Activated CD4-positive, alpha-beta T cell treated with anti-CD3 and anti-CD28 coated beads for 36 hours (primary cell): ENCODE measurements at regions of chr16 and their contacts with region 1.

Region 1: DNA sequence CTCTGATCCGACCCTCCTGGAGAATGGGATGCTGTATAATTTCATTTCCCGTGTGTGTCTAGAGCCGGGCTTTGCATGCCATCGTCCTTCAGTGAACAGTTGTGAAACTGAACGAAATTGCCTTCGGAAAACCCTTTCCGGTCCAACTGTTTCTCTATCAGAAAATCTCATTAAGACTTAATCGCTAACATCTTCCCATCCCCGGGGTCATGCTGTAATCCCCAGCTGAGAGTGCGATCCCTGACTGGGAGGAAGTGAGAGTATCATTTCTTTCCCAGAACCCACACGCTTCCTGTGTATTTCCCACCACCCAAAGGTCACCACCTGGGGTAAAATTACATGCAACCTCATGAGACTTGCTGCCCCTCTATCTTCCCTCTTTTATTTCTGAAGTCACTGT is 75.6 kb upstream of the RBFOX1 start:
- DNase-seq: no peak
- ATAC-seq: no peak
- H3K4me3 Mint-ChIP-seq: no peak overlapping the region
- H3K27ac Mint-ChIP-seq: no peak overlapping the region
- H3K4me1 Mint-ChIP-seq: no peaks in the 10 kb centered on the region
- H3K27me3 Mint-ChIP-seq: no peaks in the 10 kb centered on the region

Region 2: GRCh38 chr16:7278636-7279265 is 21.7 kb after region 1 on chr16:
- CTCF ChIA-PET with region 1: no interaction called
- POLR2A ChIA-PET with region 1: no interaction called
- intact Hi-C with region 1: loop called in 1 of 2 experiments (anchors 2 kb)
- DNase-seq: no peak
- ATAC-seq: no peak
- H3K4me3 Mint-ChIP-seq: no peak overlapping the region
- H3K27ac Mint-ChIP-seq: no peak overlapping the region
- H3K4me1 Mint-ChIP-seq: no peaks in the 10 kb centered on the region
- H3K27me3 Mint-ChIP-seq: no peaks in the 10 kb centered on the region